ENCODE measurements at regions of chr20 and their contacts with region 1.

Region 1: DNA sequence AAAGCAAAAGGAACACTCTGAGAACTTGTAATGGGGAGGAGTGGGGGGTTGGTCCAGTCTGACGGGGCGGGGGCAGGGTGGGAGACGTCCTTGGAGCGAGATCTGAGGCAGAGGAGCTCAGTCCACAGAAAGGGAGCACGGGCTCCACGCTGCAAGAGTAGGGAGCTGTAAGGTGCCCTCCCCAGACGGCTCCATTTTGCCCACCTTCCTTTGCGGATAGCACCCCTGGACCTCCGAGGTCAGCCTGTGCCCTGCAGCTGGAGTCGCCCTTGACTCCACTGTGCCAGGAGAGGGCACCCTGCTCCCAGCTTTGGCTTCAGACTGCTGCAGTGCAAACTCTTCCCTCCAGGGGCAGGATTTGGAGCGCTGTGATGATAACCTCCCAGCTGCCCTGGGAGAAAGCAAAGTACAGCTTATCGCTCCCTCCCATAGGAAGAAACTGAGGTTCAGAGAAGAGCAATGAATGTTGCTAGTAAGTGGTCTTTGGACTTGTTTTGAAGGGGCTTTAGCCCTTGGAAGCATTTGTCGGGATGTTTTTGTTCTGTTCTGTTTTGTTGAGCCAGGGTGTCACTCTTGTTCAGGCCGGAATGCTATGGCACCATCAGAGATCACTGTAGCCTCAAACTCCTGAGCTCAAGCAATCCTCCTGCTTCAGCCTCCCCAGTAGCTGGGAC is 9.5 kb upstream of the AHCY start:
- DNase-seq: peak; percentile 94
- ATAC-seq: peak; percentile 100
- H3K4me3 Mint-ChIP-seq: no peak overlapping the region
- H3K27ac Mint-ChIP-seq: no peak overlapping the region
- H3K4me1 Mint-ChIP-seq: peaks cover 4% of the 10 kb centered on the region
- H3K27me3 Mint-ChIP-seq: peaks cover 14% of the 10 kb centered on the region
- CTCF ChIP-seq: peak; percentile 100

Region 2: GRCh38 chr20:34022154-34022838 is 290.4 kb before region 1 on chr20:
- CTCF ChIA-PET with region 1: no interaction called
- POLR2A ChIA-PET with region 1: no interaction called
- intact Hi-C with region 1: no loop called
- DNase-seq: peak; percentile 33
- ATAC-seq: peak; percentile 82
- H3K4me3 Mint-ChIP-seq: no peak overlapping the region
- H3K27ac Mint-ChIP-seq: peak overlapping the region; percentile 73
- H3K4me1 Mint-ChIP-seq: peaks cover 75% of the 10 kb centered on the region
- H3K27me3 Mint-ChIP-seq: no peaks in the 10 kb centered on the region
- CTCF ChIP-seq: peak; percentile 44

Region 3: GRCh38 chr20:34334654-34335407 is 22.1 kb after region 1 on chr20:
- CTCF ChIA-PET with region 1: interaction called, 50 read pairs
- POLR2A ChIA-PET with region 1: no interaction called
- intact Hi-C with region 1: no loop called
- DNase-seq: no peak
- ATAC-seq: no peak
- H3K4me3 Mint-ChIP-seq: no peak overlapping the region
- H3K27ac Mint-ChIP-seq: no peak overlapping the region
- H3K4me1 Mint-ChIP-seq: no peaks in the 10 kb centered on the region
- H3K27me3 Mint-ChIP-seq: no peaks in the 10 kb centered on the region
- CTCF ChIP-seq: no peak

Region 4: DNA sequence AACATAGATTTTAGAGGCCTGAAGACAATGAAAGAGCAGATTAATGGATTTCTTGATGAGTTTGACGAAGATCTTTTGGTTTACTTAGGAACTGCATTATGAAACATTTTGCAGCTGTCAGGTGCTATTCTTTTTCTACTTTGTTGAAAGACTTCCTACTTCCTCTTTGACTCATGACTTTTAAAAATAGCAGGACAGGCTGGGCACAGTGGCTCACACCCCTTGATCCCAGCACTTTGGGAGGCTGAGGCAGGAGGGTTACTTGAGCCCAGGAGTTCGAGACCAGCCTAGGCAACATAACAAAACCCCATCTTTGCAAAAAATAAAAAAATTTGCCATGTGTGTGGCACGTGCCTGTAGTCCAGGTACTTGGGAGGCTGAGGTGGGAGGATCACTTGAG is 102.4 kb after region 1 on chr20:
- CTCF ChIA-PET with region 1: interaction called, 48 read pairs
- POLR2A ChIA-PET with region 1: no interaction called
- intact Hi-C with region 1: no loop called
- DNase-seq: no peak
- ATAC-seq: no peak
- H3K4me3 Mint-ChIP-seq: no peak overlapping the region
- H3K27ac Mint-ChIP-seq: peak overlapping the region; percentile 63
- H3K4me1 Mint-ChIP-seq: peaks cover 18% of the 10 kb centered on the region
- H3K27me3 Mint-ChIP-seq: no peaks in the 10 kb centered on the region
- CTCF ChIP-seq: no peak

Region 5: GRCh38 chr20:34443546-34443945 is 130.9 kb after region 1 on chr20:
- CTCF ChIA-PET with region 1: interaction called, 38 read pairs
- POLR2A ChIA-PET with region 1: no interaction called
- intact Hi-C with region 1: no loop called
- DNase-seq: no peak
- ATAC-seq: no peak
- H3K4me3 Mint-ChIP-seq: no peak overlapping the region
- H3K27ac Mint-ChIP-seq: no peak overlapping the region
- H3K4me1 Mint-ChIP-seq: peaks cover 5% of the 10 kb centered on the region
- H3K27me3 Mint-ChIP-seq: no peaks in the 10 kb centered on the region
- CTCF ChIP-seq: no peak

Region 6: DNA sequence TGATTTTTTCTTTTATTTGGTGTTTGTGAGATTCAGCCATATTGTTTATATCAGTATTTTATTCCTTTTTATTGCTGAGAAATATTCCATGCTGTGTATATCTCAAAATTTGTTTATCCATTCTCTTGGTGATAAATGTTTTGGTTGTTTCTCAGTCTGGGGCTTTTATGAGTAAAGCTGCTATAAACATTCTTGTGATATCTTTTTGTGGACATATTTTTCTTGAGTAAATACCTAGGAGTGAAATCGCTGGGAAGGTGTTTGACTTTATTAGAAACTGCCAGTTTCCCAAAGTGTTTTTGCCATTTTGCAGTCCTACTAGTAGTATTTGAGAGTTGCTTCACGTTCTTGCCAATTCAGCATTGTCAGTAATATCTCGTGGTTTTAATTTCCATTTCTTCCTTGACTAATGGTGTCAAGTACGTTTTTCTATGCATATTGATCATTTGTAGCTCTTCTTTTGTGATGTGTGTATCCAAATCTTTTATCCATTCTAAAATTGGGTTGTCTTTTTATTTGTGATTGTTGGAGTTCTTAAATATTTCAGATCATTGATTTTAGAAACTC is 172.5 kb after region 1 on chr20:
- CTCF ChIA-PET with region 1: interaction called, 21 read pairs
- POLR2A ChIA-PET with region 1: no interaction called
- intact Hi-C with region 1: no loop called
- DNase-seq: no peak
- ATAC-seq: no peak
- H3K4me3 Mint-ChIP-seq: no peak overlapping the region
- H3K27ac Mint-ChIP-seq: no peak overlapping the region
- H3K4me1 Mint-ChIP-seq: no peaks in the 10 kb centered on the region
- H3K27me3 Mint-ChIP-seq: no peaks in the 10 kb centered on the region
- CTCF ChIP-seq: no peak

Region 7: GRCh38 chr20:34522969-34523871 is 210.5 kb after region 1 on chr20:
- CTCF ChIA-PET with region 1: interaction called, 114 read pairs
- POLR2A ChIA-PET with region 1: interaction called, 4 read pairs
- intact Hi-C with region 1: no loop called
- DNase-seq: peak; percentile 72
- ATAC-seq: peak; percentile 71
- H3K4me3 Mint-ChIP-seq: no peak overlapping the region
- H3K27ac Mint-ChIP-seq: no peak overlapping the region
- H3K4me1 Mint-ChIP-seq: peaks cover 40% of the 10 kb centered on the region
- H3K27me3 Mint-ChIP-seq: no peaks in the 10 kb centered on the region
- CTCF ChIP-seq: peak; percentile 55

Region 8: GRCh38 chr20:34704177-34705007 is 391.7 kb after region 1 on chr20 and contains the start of gene TP53INP2:
- CTCF ChIA-PET with region 1: interaction called, 21 read pairs
- POLR2A ChIA-PET with region 1: no interaction called
- intact Hi-C with region 1: no loop called
- DNase-seq: peak; percentile 90
- ATAC-seq: peak; percentile 13
- H3K4me3 Mint-ChIP-seq: peak within 1 kb of the TSS; percentile 81
- H3K27ac Mint-ChIP-seq: peak within 1 kb of the TSS; percentile 77
- H3K4me1 Mint-ChIP-seq: peaks cover 18% of the 10 kb centered on the region
- H3K27me3 Mint-ChIP-seq: peaks cover 7% of the 10 kb centered on the region
- CTCF ChIP-seq: no peak
- total RNA-seq, gene TP53INP2: 4.0 to 4.6 TPM